ENCODE measurements at regions of chr17 and their contacts with region 1.

Region 1: GRCh38 chr17:40542558-40543411 is 22.5 kb downstream of the CCR7 start:
- DNase-seq: peak in 3 of 10 donors; percentile 12 to 64 (median 47)
- ATAC-seq: no peak
- H3K4me3 Mint-ChIP-seq: peak overlapping the region; percentile 49 to 91 (median 77)
- H3K27ac Mint-ChIP-seq: peak overlapping the region; percentile 90 to 99 (median 96)
- H3K4me1 Mint-ChIP-seq: peaks cover 51 to 93% (median 87%) of the 10 kb centered on the region in 4 donors
- H3K27me3 Mint-ChIP-seq: peaks cover 0 to 2% (median 0%) of the 10 kb centered on the region in 5 donors

Region 2: DNA sequence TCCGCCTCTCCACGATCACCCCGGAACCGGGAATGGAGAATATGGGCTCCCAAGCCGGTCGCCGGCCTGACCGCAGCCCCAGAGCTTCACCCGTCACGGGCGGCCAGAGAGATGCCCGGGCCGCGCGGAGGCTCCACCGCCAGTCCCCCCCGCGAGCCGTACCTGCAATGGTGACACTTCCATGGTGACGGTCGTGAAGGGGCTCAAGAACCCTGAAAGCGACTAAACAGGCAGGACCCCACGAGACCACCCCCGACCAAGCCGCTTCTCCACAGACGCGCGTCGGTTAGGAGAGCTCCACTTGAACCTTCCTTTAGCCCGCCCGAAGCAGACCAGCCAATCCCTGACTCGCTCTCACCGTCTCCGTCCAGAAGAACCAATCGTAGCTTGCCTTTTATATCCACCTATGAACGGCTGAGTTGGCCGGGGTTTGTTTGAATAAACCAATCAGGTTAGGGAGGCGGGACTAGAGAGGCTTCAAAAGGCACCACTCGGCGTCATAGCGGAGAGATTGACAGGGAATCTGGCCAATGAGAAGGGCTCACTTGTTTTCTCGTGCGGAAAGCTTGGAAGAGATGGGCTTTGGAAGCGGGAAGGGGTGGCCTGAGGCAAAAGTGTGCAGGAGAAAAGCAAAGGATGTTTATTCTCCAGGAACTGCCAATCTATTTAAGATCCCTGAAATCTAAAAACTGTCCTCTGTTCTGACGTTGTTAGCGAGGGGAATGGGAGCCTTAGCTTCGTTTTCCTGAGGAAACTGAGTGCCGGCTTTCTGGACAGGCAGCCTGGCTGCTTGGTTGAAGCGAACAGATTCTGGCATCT is 125.0 kb before region 1 on chr17 and contains the start of gene TOP2A:
- POLR2A ChIA-PET with region 1: interaction called, 17 read pairs
- DNase-seq: peak; percentile 70 to 100 (median 97)
- ATAC-seq: peak; percentile 98 to 100
- H3K4me3 Mint-ChIP-seq: peak within 1 kb of the TSS; percentile 85 to 97 (median 92)
- H3K27ac Mint-ChIP-seq: peak within 1 kb of the TSS; percentile 73 to 94 (median 88)
- H3K4me1 Mint-ChIP-seq: peaks cover 6 to 27% (median 19%) of the 10 kb centered on the region in 4 donors
- H3K27me3 Mint-ChIP-seq: peaks cover 0 to 4% (median 0%) of the 10 kb centered on the region in 5 donors
- polyA plus RNA-seq, gene TOP2A: 0.14 TPM in 1 of 3 donors, not detected in the others

Region 3: DNA sequence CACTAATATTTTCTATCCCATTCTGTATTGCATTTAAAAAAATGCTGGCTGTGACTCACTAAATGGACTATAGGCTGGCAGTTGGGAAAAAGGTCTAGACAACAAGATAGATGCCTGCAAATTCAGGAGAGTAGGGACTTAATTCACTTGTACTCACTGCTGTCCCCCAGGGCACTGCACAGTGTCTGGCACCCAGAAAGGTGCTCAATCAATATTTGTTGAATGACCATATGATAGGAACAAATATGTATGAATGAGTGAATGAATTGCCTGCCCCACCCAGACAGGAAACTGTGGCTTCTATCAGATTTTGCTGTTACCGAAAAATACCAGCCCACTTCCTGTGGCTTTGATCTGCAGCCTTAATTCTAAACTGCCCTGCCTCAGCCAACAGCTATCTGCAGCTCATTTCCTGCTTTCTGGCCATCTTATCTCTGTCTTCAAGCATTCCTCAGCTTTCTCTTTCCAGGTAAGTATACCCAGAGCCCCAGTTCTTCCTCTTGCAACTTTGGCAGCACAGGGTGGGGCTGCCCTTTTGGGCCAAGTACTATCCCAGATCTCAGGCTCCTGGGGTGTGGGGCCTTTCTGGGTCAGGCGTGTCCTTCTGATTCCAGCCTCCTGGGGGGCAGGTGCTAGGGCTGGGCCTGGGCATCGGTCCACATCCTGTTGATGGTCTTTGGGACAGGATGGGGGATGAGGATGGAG is 26.1 kb before region 1 on chr17:
- POLR2A ChIA-PET with region 1: interaction called, 21 read pairs
- DNase-seq: peak in 9 of 10 donors; percentile 47 to 89 (median 78)
- ATAC-seq: peak; percentile 85 to 87
- H3K4me3 Mint-ChIP-seq: peak overlapping the region; percentile 58 to 85 (median 76)
- H3K27ac Mint-ChIP-seq: peak overlapping the region; percentile 32 to 95 (median 90)
- H3K4me1 Mint-ChIP-seq: peaks cover 43 to 65% (median 58%) of the 10 kb centered on the region in 4 donors
- H3K27me3 Mint-ChIP-seq: peaks cover 0 to 15% (median 8%) of the 10 kb centered on the region in 5 donors

Measured in naive thymus-derived CD8-positive, alpha-beta T cell (primary cell).